ENCODE measurements at regions of chr22 and their contacts with region 1.

Region 1: GRCh38 chr22:22787786-22788459 is 99.7 kb upstream of the IGLL5 start:
- DNase-seq: peak; percentile 66 to 75 (median 70)
- H3K4me3 ChIP-seq: no peak overlapping the region
- H3K4me3 Mint-ChIP-seq: peak overlapping the region in 7 of 8 donors; percentile 6 to 61 (median 53)
- H3K27ac ChIP-seq: peak overlapping the region; percentile 49
- H3K27ac Mint-ChIP-seq: peak overlapping the region; percentile 79 to 94 (median 90)
- H3K4me1 ChIP-seq: peaks cover 58% of the 10 kb centered on the region
- H3K4me1 Mint-ChIP-seq: peaks cover 34 to 75% (median 52%) of the 10 kb centered on the region in 4 donors
- H3K27me3 ChIP-seq: no peaks in the 10 kb centered on the region
- H3K27me3 Mint-ChIP-seq: no peaks in the 10 kb centered on the region

Region 2: DNA sequence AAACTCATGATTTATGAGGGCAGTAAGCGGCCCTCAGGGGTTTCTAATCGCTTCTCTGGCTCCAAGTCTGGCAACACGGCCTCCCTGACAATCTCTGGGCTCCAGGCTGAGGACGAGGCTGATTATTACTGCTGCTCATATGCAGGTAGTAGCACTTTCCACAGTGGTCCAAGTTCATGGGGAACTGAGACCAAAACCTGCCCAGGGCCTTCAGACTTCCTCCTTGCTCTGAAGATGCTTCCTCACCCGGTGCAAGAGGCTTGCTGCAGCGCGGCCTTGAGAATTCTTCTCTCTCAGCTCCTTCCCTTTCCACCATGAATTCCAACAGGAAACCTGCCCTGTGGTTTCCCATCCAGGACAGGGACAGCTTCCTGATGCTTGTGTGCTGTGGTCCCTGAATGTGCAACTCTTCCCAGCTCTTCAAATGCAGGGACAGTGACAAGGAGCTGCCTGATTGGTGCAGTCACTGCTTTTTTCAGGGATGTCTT is 89.6 kb before region 1 on chr22:
- CTCF ChIA-PET with region 1: no interaction called
- POLR2A ChIA-PET with region 1: no interaction called
- intact Hi-C with region 1: no loop called
- DNase-seq: no peak
- H3K4me3 ChIP-seq: no peak overlapping the region
- H3K4me3 Mint-ChIP-seq: no peak overlapping the region
- H3K27ac ChIP-seq: no peak overlapping the region
- H3K27ac Mint-ChIP-seq: no peak overlapping the region
- H3K4me1 ChIP-seq: no peaks in the 10 kb centered on the region
- H3K4me1 Mint-ChIP-seq: peaks cover 0 to 2% (median 0%) of the 10 kb centered on the region in 4 donors
- H3K27me3 ChIP-seq: no peaks in the 10 kb centered on the region
- H3K27me3 Mint-ChIP-seq: peaks cover 0 to 2% of the 10 kb centered on the region in 2 donors

Region 3: GRCh38 chr22:22770280-22770871 is 17.5 kb before region 1 on chr22:
- CTCF ChIA-PET with region 1: interaction called, 54 read pairs
- POLR2A ChIA-PET with region 1: interaction called, 6 read pairs
- intact Hi-C with region 1: no loop called
- DNase-seq: peak; percentile 20 to 46 (median 30)
- H3K4me3 ChIP-seq: no peak overlapping the region
- H3K4me3 Mint-ChIP-seq: no peak overlapping the region
- H3K27ac ChIP-seq: no peak overlapping the region
- H3K27ac Mint-ChIP-seq: peak overlapping the region in 5 of 7 donors; percentile 2 to 72 (median 23)
- H3K4me1 ChIP-seq: no peaks in the 10 kb centered on the region
- H3K4me1 Mint-ChIP-seq: peaks cover 10 to 28% (median 19%) of the 10 kb centered on the region in 4 donors
- H3K27me3 ChIP-seq: no peaks in the 10 kb centered on the region
- H3K27me3 Mint-ChIP-seq: peaks cover 3 to 4% of the 10 kb centered on the region in 2 donors

Region 4: DNA sequence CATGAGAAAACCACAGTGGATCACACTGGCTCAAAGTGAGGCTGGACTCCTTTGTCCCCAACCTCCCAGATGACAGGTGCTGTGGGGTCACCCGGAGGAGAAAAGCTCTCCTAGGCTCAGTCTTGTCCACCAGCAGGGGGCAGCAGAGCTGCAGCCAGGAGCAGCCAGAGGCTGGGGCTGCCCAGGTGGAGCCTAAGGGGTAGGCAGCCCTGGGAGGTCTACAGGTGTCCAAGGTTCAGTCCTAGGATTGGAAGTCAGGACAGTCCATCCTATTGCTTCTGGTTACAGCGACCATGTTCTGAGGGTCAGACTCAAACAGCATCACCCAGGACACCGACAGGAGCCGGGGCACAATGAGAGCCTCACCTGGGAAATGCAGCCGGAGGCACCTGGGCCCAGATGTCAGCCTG is 22.1 kb after region 1 on chr22:
- CTCF ChIA-PET with region 1: interaction called, 164 read pairs
- POLR2A ChIA-PET with region 1: interaction called, 53 read pairs
- intact Hi-C with region 1: loop called (anchors 1 kb)
- DNase-seq: peak; percentile 76 to 82 (median 76)
- H3K4me3 ChIP-seq: no peak overlapping the region
- H3K4me3 Mint-ChIP-seq: peak overlapping the region in 4 of 8 donors; percentile 12 to 53 (median 44)
- H3K27ac ChIP-seq: no peak overlapping the region
- H3K27ac Mint-ChIP-seq: peak overlapping the region in 6 of 7 donors; percentile 67 to 91 (median 80)
- H3K4me1 ChIP-seq: peaks cover 26% of the 10 kb centered on the region
- H3K4me1 Mint-ChIP-seq: peaks cover 40 to 79% (median 57%) of the 10 kb centered on the region in 4 donors
- H3K27me3 ChIP-seq: no peaks in the 10 kb centered on the region
- H3K27me3 Mint-ChIP-seq: no peaks in the 10 kb centered on the region

Region 5: DNA sequence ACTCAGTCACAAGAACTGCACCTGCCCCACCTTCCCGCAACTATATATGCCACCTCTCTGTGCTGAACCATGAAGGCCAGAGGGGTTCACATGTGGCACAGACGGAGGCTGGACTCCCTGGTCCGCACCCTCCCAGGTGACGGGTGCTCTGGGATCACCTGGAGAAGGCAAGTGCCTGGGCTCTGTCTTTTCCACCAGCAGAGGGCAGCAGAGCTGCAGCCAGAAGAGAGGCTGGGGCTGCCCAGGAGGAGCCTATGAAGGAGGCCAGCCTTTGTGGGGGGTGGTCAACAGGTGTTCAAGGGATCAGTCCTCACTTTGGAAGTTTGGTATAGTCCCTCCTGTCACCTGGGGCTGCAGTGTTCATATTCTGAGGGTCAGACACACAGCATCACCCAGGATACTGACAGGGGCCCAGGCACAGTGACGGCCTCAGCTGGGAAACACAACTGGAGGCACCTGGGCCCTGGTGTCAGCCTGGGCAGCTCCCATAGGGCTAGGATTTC is 60.5 kb after region 1 on chr22:
- CTCF ChIA-PET with region 1: interaction called, 51 read pairs
- POLR2A ChIA-PET with region 1: interaction called, 7 read pairs
- intact Hi-C with region 1: no loop called
- DNase-seq: peak; percentile 52 to 72 (median 57)
- H3K4me3 ChIP-seq: no peak overlapping the region
- H3K4me3 Mint-ChIP-seq: peak overlapping the region in 4 of 8 donors; percentile 32 to 49 (median 40)
- H3K27ac ChIP-seq: no peak overlapping the region
- H3K27ac Mint-ChIP-seq: peak overlapping the region in 5 of 7 donors; percentile 42 to 70 (median 61)
- H3K4me1 ChIP-seq: peaks cover 12% of the 10 kb centered on the region
- H3K4me1 Mint-ChIP-seq: peaks cover 31 to 55% (median 45%) of the 10 kb centered on the region in 4 donors
- H3K27me3 ChIP-seq: no peaks in the 10 kb centered on the region
- H3K27me3 Mint-ChIP-seq: peaks cover 0 to 1% of the 10 kb centered on the region in 2 donors

Region 6: DNA sequence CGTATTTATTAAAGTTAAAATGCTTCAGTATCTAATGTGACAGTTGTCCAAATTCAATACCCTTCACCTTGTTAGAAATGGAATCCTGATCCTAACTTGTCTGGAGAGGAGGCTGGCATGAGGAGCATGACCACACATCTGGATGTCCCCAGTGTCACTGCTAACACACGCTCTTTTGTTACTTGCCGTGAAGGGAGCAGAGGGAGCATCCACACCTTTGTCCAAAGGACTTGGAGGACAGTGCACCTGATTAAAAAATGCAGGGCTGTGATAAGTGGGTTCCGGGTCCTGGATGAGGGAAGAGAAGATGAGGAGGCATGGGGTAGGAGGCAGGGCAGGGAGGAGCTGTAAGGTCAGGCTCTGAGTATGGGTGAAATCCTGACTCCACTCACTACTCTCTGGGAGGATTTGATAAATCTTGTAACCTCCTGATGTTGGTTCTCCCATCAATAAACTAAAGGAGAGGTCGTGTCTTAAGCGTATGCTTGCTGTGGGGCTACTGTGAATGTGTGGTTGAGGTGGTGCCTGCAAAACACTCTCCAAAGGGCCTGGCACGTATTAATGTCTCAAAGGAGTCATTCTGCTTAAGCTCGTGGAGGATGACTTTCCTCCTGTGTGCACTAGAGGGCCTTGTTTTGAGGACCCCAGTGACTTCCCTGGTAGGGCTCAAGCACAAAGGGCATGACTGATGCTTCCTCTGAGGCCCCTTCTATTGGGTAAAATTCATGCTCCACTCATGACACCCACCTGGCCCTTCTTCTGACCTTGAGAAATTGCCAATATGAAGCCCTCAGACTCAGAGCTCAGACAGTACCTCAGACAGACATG is 82.9 kb after region 1 on chr22:
- CTCF ChIA-PET with region 1: interaction called, 32 read pairs
- POLR2A ChIA-PET with region 1: interaction called, 3 read pairs
- intact Hi-C with region 1: no loop called
- DNase-seq: no peak
- H3K4me3 ChIP-seq: no peak overlapping the region
- H3K4me3 Mint-ChIP-seq: no peak overlapping the region
- H3K27ac ChIP-seq: no peak overlapping the region
- H3K27ac Mint-ChIP-seq: peak overlapping the region in 3 of 7 donors; percentile 29 to 72 (median 63)
- H3K4me1 ChIP-seq: peaks cover 13% of the 10 kb centered on the region
- H3K4me1 Mint-ChIP-seq: peaks cover 12 to 29% (median 15%) of the 10 kb centered on the region in 4 donors
- H3K27me3 ChIP-seq: no peaks in the 10 kb centered on the region
- H3K27me3 Mint-ChIP-seq: no peaks in the 10 kb centered on the region

Region 7: DNA sequence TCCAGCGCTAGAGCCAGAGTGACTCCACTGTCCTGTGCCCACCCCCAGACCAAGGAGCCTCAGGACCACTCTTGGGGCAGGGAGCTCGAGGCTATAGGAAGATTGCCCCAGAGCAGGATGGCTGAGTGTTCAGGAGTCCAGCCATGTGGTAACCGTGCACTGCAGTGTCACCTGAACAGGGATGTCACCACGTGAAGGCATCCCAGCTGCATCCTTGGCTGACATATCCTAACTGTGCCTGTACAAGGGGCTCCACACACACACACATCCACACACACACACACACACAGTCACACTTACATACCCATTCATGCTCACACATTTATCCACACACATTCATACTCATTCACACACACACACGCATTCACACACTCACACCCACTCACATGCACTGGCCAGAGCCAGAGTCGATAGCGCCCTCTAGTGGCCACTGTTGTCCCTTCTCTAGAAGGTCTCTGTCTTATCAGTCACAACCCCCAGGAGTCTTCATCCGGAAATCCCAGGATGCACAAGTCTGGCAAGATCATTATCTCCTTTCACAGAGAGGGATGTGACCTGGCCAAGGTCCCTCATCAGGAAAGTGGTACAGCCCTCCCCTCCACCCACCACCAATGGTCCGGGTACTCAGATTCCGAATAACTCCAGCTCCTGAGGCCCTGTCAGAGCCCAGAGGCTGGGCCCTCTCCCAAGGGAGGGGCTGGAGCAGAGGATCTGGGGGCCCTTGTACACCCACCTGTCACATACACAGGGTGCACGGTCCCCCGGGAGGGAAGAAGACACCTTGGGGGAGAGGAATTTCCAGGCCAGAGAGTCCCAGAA is 154.8 kb after region 1 on chr22:
- CTCF ChIA-PET with region 1: interaction called, 12 read pairs
- POLR2A ChIA-PET with region 1: no interaction called
- intact Hi-C with region 1: no loop called
- DNase-seq: peak; percentile 42 to 72 (median 62)
- H3K4me3 ChIP-seq: no peak overlapping the region
- H3K4me3 Mint-ChIP-seq: no peak overlapping the region
- H3K27ac ChIP-seq: no peak overlapping the region
- H3K27ac Mint-ChIP-seq: no peak overlapping the region
- H3K4me1 ChIP-seq: peaks cover 5% of the 10 kb centered on the region
- H3K4me1 Mint-ChIP-seq: peaks cover 2 to 5% (median 4%) of the 10 kb centered on the region in 4 donors
- H3K27me3 ChIP-seq: no peaks in the 10 kb centered on the region
- H3K27me3 Mint-ChIP-seq: peaks cover 1 to 3% of the 10 kb centered on the region in 2 donors

Measured in CD4-positive, alpha-beta memory T cell (primary cell).